Lower lobe of right lung (tissue), 2 donors: ENCODE measurements at regions of chr1 and their contacts with region 1.

Region 1: GRCh38 chr1:76247261-76247852 is 172.8 kb downstream of the ST6GALNAC3 start:
- DNase-seq: no peak
- ATAC-seq: no peak
- H3K4me3 ChIP-seq: no peak overlapping the region
- H3K27ac ChIP-seq: no peak overlapping the region
- H3K4me1 ChIP-seq: no peaks in the 10 kb centered on the region
- H3K27me3 ChIP-seq: no peaks in the 10 kb centered on the region
- CTCF ChIP-seq: no peak

Region 2: DNA sequence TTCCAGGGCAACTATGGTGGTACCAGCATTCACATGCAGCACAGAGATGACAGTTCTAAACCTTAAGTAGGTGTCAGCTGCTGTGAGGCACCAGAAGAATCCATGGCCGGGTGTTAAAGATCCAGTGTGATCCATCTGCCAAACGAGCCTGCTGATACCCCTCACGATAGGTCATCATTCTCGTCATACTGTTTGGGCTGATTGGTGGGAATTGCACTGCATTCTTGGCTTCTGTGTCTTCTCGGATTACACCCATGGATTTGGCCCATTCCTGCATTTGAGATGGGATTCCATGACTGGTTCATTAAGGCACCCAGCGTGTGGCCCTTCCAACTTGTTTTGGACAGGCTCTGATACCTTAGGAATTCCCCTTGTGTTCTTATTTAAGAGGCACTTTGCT is 117.6 kb before region 1 on chr1:
- intact Hi-C with region 1: loop called (anchors 5 kb)
- DNase-seq: no peak
- ATAC-seq: no peak
- H3K4me3 ChIP-seq: no peak overlapping the region
- H3K27ac ChIP-seq: no peak overlapping the region
- H3K4me1 ChIP-seq: no peaks in the 10 kb centered on the region
- H3K27me3 ChIP-seq: no peaks in the 10 kb centered on the region
- CTCF ChIP-seq: no peak

Region 3: DNA sequence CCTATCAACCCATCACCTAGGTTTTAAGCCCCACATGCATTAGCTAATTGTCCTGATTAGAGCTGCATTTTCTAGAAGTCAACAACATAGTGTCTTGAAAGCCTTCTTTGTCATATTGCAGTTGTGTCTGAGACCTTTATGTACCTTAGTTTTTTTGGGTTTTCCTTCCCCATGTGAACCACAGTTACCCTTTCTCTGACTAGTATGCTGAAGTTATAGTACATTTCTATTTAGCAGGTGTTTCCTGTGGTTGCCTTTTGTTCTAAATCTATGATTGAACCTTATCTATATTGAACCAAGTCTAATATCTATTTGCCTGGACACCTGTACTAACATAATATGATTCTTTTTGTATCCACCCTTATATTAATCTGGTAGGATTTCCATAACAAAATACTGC is 37.2 kb before region 1 on chr1:
- intact Hi-C with region 1: no loop called
- DNase-seq: no peak
- ATAC-seq: no peak
- H3K4me3 ChIP-seq: no peak overlapping the region
- H3K27ac ChIP-seq: no peak overlapping the region
- H3K4me1 ChIP-seq: no peaks in the 10 kb centered on the region
- H3K27me3 ChIP-seq: no peaks in the 10 kb centered on the region
- CTCF ChIP-seq: no peak